GM10248 (cell line): ENCODE measurements at regions of chr9 and their contacts with region 1.

Region 1: GRCh38 chr9:22119537-22120158 is 110.5 kb upstream of the CDKN2B start:
- DNase-seq: no peak
- CTCF ChIP-seq: peak; percentile 40

Region 2: GRCh38 chr9:22030101-22030598 is 89.5 kb before region 1 on chr9:
- CTCF ChIA-PET with region 1: no interaction called
- POLR2A ChIA-PET with region 1: no interaction called
- DNase-seq: no peak
- CTCF ChIP-seq: no peak

Region 3: DNA sequence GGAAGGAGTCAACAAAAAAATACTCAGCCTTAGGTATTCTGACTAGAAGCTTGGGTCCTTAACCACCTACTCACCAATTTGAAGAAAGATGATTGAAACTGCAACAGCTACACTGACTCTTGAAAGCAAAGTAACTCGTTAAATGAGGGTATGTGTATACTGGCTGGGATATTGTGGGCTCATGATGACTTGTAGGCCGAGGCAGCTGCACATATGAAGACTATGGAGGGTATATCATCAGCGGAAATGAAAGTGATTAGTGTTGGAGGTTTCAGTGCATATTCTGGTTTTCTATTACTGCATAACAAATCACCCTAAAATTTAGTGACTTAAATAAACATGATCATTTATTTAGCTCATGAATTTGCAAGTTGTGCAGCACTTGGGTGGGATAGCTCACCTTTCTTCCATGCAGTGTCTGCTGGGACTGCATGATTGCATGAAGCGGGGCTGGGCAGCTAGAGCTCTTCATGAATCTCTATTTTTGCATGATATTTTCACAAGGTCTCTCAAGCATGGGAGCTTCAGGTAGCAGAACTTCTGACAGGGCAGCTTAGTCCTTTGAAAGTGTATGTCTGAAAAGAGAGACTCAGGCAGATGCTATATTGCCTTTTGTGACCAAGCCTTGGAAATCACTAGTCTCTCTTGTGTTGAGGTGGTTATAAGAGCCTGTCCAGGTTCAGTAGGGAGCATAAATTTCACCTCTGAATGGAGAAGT is 14.5 kb before region 1 on chr9:
- CTCF ChIA-PET with region 1: interaction called, 18 read pairs
- POLR2A ChIA-PET with region 1: no interaction called
- DNase-seq: peak; percentile 28
- CTCF ChIP-seq: no peak

Region 4: DNA sequence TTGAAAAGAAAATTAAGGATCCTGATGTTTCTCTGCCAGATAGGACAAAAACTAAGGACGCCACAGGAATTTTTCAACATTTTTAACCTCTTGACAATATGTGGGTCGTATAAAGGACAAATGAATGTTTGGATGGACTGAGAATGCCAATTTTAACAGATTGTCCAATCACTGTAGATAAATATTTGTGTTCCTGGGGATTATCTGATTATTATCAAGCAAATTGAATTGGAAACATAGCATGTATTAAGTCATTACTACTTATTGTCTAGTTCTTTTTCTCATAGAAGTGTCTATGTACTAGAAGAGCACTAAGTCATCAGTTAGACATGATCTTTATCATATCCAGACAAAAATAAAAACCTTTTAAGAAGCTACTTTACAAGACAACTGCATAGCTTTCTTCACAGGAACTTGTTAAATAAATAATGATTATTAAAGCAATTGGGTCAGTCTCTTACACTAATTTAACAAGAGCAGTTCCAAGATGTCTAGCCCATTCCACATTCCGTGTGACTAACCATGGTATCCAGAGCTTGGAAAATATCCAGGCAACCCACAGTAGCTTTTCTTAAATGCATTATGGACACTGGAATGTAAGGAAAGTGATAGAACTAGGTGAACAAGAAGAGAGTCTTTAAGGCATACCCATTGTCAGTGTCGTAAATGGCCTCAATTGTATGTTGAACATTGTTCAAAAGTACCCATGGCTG is 17.0 kb after region 1 on chr9:
- CTCF ChIA-PET with region 1: interaction called, 25 read pairs
- POLR2A ChIA-PET with region 1: no interaction called
- DNase-seq: no peak
- CTCF ChIP-seq: no peak